Vagina (tissue), 2 donors: ENCODE measurements at regions of chr14 and their contacts with region 1.

Region 1: DNA sequence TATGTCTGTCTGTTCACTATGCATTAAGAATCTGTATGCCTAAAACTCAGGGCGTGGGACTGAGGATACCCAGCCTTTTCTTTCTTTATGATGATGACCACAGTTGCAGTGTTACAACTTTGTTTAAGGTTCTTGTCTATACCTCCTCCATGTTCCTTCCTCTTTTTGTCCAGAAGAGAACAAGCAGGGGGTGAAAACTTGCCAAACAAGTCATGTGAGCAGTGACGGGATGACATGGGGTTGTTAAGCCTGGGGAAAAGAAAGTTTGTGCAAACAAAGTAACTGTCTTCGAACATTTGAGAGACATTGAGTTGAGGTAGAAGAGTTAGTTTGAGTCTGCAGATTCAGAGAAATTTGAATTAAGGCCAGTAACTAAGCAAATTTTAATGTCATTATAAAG is 505.5 kb downstream of the NPAS3 start:
- DNase-seq: no peak
- H3K4me3 ChIP-seq: no peak overlapping the region
- H3K27ac ChIP-seq: no peak overlapping the region
- H3K4me1 ChIP-seq: no peaks in the 10 kb centered on the region
- H3K27me3 ChIP-seq: no peaks in the 10 kb centered on the region
- CTCF ChIP-seq: no peak
- POLR2A ChIP-seq: no peak

Region 2: DNA sequence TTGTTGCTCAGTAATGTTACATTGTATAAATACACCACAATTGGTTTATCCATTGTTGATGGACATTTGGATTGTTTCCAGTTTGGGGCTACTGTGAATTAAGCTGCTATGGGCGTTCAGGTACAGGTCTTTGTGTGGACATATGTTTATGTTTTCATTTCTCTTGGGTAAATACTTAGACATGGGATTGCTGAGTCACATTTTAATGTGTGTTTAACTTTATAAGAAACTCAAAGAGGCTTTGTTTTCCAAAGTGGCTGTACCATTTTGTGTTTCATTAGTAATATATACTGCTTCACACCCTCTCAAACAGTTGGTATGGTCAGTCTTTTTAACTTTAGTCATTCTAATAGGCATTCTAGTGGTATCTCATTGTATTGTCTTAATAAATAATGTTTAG is 792.9 kb after region 1 on chr14:
- intact Hi-C with region 1: loop called (anchors 10 kb)
- DNase-seq: no peak
- H3K4me3 ChIP-seq: no peak overlapping the region
- H3K27ac ChIP-seq: no peak overlapping the region
- H3K4me1 ChIP-seq: no peaks in the 10 kb centered on the region
- H3K27me3 ChIP-seq: no peaks in the 10 kb centered on the region
- CTCF ChIP-seq: no peak
- POLR2A ChIP-seq: no peak